Activated CD4-positive, alpha-beta T cell treated with anti-CD3 and anti-CD28 coated beads, Interleukin-2, amount 10 ng/mL, durations not matched to agents 24 days and 14 days (primary cell): ENCODE measurements at regions of chr21 and their contacts with region 1.

Region 1: GRCh38 chr21:28771790-28772501 is 220.7 kb downstream of the LTN1 start:
- DNase-seq: no peak
- H3K4me3 Mint-ChIP-seq: no peak overlapping the region
- H3K27ac Mint-ChIP-seq: no peak overlapping the region
- H3K4me1 Mint-ChIP-seq: peaks cover 44% of the 10 kb centered on the region
- H3K27me3 Mint-ChIP-seq: no peaks in the 10 kb centered on the region

Region 2: DNA sequence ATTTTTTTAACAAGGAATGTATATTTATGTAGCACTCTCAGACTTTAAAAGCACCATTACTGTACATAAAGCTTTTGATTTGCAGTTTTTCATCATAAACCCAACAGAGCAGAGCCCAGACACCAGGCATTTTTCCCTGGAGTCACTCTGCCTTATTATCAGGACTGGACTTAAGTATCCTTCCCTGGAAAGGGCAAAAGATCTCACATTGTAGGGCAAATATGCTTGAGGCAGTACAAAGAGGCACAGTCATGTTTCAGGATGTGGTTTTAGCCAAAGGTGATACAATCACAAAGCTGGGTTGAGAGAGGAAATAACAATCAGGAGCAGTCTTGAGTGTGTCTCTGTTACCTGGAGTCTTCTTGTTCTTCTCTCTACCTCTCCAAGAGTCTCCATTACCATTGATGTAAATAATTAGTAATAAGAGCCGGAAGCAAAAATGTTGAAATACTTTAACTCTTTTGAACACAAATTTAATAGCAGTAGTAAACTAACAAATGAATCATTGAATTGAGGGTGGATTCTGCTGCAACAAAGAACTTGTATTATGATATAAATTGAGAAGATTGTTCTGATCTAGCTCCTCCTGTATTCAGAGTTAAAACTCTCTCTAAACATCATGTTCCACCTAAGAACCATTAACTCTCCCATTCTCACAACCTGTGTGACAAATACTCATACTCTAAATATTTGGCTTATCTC is 60.2 kb after region 1 on chr21:
- intact Hi-C with region 1: loop called (anchors 1 kb)
- DNase-seq: peak; percentile 84
- H3K4me3 Mint-ChIP-seq: peak overlapping the region; percentile 75
- H3K27ac Mint-ChIP-seq: peak overlapping the region; percentile 83
- H3K4me1 Mint-ChIP-seq: peaks cover 58% of the 10 kb centered on the region
- H3K27me3 Mint-ChIP-seq: no peaks in the 10 kb centered on the region

Region 3: GRCh38 chr21:28944296-28944695 is 172.3 kb after region 1 on chr21:
- intact Hi-C with region 1: loop called (anchors 10 kb)
- DNase-seq: no peak
- H3K4me3 Mint-ChIP-seq: no peak overlapping the region
- H3K27ac Mint-ChIP-seq: no peak overlapping the region
- H3K4me1 Mint-ChIP-seq: peaks cover 8% of the 10 kb centered on the region
- H3K27me3 Mint-ChIP-seq: no peaks in the 10 kb centered on the region

Region 4: DNA sequence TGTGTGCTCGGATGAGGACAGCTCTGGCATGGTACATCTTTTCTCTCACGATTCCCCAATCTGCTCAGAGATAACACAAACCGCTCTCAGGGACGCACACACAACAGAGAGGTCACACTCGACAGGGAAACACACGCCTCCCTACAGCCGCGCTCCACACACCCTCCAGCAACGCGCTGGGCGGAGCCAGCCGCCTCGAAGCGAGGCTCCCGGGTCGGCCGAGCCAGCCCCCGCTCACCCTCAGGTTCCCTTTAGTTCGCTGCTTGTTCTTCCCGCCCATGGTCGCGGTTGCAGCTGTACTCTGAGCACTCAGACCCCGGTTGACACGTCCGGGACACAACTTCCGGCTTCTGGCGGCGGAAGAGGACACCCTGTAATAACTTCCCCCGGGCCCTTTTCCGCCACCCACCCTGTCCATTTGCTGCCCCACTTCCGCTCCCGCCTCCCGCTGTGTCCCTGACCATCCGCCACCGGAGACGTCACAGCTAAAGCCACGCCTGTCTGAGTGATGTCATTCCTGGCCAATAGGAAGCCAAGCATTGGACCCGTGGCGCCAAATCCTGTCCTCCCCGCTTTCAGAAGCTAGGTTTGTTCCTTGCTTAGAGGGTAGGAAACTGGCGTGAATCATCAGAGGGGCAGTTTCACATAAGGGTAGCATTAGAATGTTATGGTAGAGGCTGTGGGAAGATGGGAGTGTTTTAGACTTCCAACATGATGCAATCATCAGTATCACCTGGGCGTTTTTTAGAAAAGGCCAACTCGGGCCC is 220.8 kb after region 1 on chr21 and contains the start of gene LTN1:
- intact Hi-C with region 1: loop called (anchors 5 kb)
- DNase-seq: peak; percentile 100
- H3K4me3 Mint-ChIP-seq: peak within 1 kb of the TSS; percentile 94
- H3K27ac Mint-ChIP-seq: peak within 1 kb of the TSS; percentile 98
- H3K4me1 Mint-ChIP-seq: peaks cover 40% of the 10 kb centered on the region
- H3K27me3 Mint-ChIP-seq: peaks cover 2% of the 10 kb centered on the region
- total RNA-seq, gene LTN1: 25.6 and 31.0 TPM in 2 replicates